T-cell (primary cell): ENCODE measurements at regions of chr11 and their contacts with region 1.

Region 1: DNA sequence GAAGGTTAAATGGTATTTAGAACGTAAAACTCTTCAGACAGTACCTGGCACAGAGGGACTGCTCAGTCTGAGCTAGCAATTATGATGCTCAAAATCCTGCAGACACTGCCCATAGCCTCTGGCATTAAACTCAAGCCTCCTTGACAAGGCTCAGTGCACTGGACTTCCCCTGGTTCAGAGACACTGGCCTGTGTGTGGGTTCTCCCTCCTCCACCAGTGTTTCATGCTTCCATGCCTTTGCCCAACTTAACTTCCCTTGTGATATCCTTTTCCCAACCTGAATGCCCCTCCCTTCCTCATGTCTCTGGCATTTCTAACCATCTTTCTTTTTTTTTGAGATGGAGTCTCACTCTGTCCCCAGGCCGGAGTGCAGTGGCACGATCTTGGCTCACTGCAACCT is 9.1 kb downstream of the LTBP3 start:
- DNase-seq: no peak
- ATAC-seq: no peak
- H3K4me3 ChIP-seq: no peak overlapping the region
- H3K4me3 Mint-ChIP-seq: peak overlapping the region in 1 of 3 donors; percentile 79
- H3K27ac ChIP-seq: peak overlapping the region; percentile 2
- H3K27ac Mint-ChIP-seq: peak overlapping the region; percentile 22 to 84
- H3K4me1 ChIP-seq: peaks cover 19 to 71% of the 10 kb centered on the region in 2 experiments
- H3K4me1 Mint-ChIP-seq: peaks cover 57 to 76% (median 64%) of the 10 kb centered on the region in 3 donors
- H3K27me3 ChIP-seq: no peaks in the 10 kb centered on the region
- H3K27me3 Mint-ChIP-seq: no peaks in the 10 kb centered on the region

Region 2: GRCh38 chr11:65599216-65599954 is 50.3 kb after region 1 on chr11:
- CTCF ChIA-PET with region 1: no interaction called
- POLR2A ChIA-PET with region 1: no interaction called
- DNase-seq: no peak
- ATAC-seq: no peak
- H3K4me3 ChIP-seq: no peak overlapping the region
- H3K4me3 Mint-ChIP-seq: no peak overlapping the region
- H3K27ac ChIP-seq: no peak overlapping the region
- H3K27ac Mint-ChIP-seq: no peak overlapping the region
- H3K4me1 ChIP-seq: peaks cover 0 to 18% of the 10 kb centered on the region in 2 experiments
- H3K4me1 Mint-ChIP-seq: peaks cover 6 to 14% (median 11%) of the 10 kb centered on the region in 3 donors
- H3K27me3 ChIP-seq: no peaks in the 10 kb centered on the region
- H3K27me3 Mint-ChIP-seq: no peaks in the 10 kb centered on the region

Region 3: DNA sequence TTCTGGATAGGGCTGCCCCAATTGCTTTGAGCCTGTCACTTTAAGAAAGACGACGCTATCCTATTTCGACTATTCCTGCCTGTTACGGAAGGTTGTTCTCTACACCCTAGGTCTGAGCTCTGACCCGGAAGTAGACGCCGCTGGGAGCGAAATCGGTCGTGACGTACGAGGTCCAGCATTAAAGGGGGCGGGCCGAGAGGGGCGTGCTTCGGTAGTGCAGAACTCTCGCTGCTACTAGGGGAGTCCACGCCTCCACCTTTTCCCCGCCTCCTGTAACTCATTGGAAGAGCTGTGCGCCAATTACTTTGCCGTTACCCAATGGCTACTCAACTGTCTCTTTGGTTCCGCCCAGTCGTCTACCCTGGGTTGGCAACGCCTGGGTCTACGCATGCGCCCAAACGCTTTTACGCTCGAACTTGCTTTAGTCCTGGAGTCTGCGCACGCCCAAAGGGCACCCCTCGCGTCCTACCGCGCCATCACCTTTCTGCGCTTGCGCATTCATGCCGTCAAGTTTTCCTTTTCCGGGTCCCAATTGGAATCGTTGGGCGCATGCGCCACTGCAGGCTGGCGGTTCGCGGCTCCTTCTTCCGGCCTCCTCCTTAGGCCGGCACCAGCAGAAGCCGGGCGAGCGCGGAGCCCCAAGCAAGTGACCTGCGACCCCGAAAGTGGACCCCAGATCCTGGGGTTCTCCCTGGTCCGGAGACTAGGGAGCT is 66.3 kb after region 1 on chr11 and contains the start of gene PCNX3:
- CTCF ChIA-PET with region 1: no interaction called
- POLR2A ChIA-PET with region 1: interaction called in 1 of 2 experiments, 12 read pairs
- DNase-seq: peak; percentile 99 to 100 (median 100)
- ATAC-seq: peak; percentile 86 to 90 (median 88)
- H3K4me3 ChIP-seq: peak within 1 kb of the TSS; percentile 94 to 99
- H3K4me3 Mint-ChIP-seq: peak within 1 kb of the TSS; percentile 91 to 96 (median 93)
- H3K27ac ChIP-seq: peak within 1 kb of the TSS; percentile 99
- H3K27ac Mint-ChIP-seq: peak within 1 kb of the TSS; percentile 95 to 97
- H3K4me1 ChIP-seq: peaks cover 39 to 79% of the 10 kb centered on the region in 2 experiments
- H3K4me1 Mint-ChIP-seq: peaks cover 45 to 56% (median 52%) of the 10 kb centered on the region in 3 donors
- H3K27me3 ChIP-seq: no peaks in the 10 kb centered on the region
- H3K27me3 Mint-ChIP-seq: no peaks in the 10 kb centered on the region
- total RNA-seq, gene PCNX3: 54.2 to 74.7 (median 66.8) TPM